ENCODE measurements at regions of chr17 and their contacts with region 1.

Region 1: GRCh38 chr17:19362277-19363113 is at the start of gene B9D1:
- DNase-seq: peak; percentile 98
- CTCF ChIP-seq: peak; percentile 98

Region 2: GRCh38 chr17:19284005-19284959 is 78.2 kb before region 1 on chr17:
- in situ Hi-C with region 1: no loop called
- DNase-seq: peak; percentile 84
- CTCF ChIP-seq: no peak

Region 3: GRCh38 chr17:19424934-19425868 is 62.7 kb after region 1 on chr17:
- in situ Hi-C with region 1: loop called (anchors 10 kb)
- DNase-seq: no peak
- CTCF ChIP-seq: no peak

Region 4: GRCh38 chr17:19766422-19767270 is 404.2 kb after region 1 on chr17:
- in situ Hi-C with region 1: loop called (anchors 25 kb)
- DNase-seq: peak; percentile 84
- CTCF ChIP-seq: peak; percentile 99

Measured in GM13977 (cell line).